Activated CD4-positive, alpha-beta T cell treated with anti-CD3 and anti-CD28 coated beads for 36 hours (primary cell): ENCODE measurements at regions of chr16 and their contacts with region 1.

Region 1: GRCh38 chr16:48054881-48055601 is 100.8 kb downstream of the ABCC12 start:
- DNase-seq: peak; percentile 64
- ATAC-seq: peak; percentile 61
- H3K4me3 Mint-ChIP-seq: no peak overlapping the region
- H3K27ac Mint-ChIP-seq: no peak overlapping the region
- H3K4me1 Mint-ChIP-seq: peaks cover 5% of the 10 kb centered on the region
- H3K27me3 Mint-ChIP-seq: peaks cover 20% of the 10 kb centered on the region

Region 2: GRCh38 chr16:47037746-47038458 is 1017.1 kb before region 1 on chr16:
- CTCF ChIA-PET with region 1: interaction called, 3 read pairs
- POLR2A ChIA-PET with region 1: no interaction called
- intact Hi-C with region 1: loop called in 1 of 2 experiments (anchors 5 kb)
- DNase-seq: peak; percentile 94
- ATAC-seq: peak; percentile 98
- H3K4me3 Mint-ChIP-seq: peak overlapping the region; percentile 65
- H3K27ac Mint-ChIP-seq: no peak overlapping the region
- H3K4me1 Mint-ChIP-seq: peaks cover 2% of the 10 kb centered on the region
- H3K27me3 Mint-ChIP-seq: peaks cover 8% of the 10 kb centered on the region

Region 3: DNA sequence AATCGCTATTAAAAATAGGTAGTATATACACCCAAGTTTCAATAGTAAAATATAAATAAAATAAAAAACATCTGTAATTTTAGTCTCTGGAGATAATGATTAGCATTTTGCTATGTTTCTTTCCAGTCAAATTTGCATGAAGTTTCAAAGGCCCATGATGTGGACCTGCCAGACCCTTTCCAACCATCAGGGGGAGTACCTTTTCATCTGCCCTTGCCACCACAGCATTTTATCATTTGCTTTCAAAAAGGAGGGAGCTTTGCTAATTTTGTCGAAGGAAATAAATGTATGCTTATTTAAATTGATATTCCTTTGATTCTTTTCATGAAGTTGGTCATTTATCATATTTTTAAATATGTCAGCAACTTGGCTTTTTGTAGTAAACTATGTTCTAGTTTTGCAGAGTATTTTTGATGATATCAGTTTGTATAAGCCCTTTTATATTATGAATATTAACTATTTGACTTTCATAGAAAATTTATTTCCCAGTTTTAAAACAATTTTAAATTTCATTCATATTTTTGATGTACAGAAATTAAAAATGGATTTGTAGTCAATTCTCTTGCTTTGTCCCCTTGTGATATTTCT is 796.1 kb before region 1 on chr16:
- CTCF ChIA-PET with region 1: no interaction called
- POLR2A ChIA-PET with region 1: no interaction called
- intact Hi-C with region 1: loop called in 1 of 2 experiments (anchors 2 kb)
- DNase-seq: peak; percentile 30
- ATAC-seq: no peak
- H3K4me3 Mint-ChIP-seq: no peak overlapping the region
- H3K27ac Mint-ChIP-seq: no peak overlapping the region
- H3K4me1 Mint-ChIP-seq: no peaks in the 10 kb centered on the region
- H3K27me3 Mint-ChIP-seq: no peaks in the 10 kb centered on the region

Region 4: DNA sequence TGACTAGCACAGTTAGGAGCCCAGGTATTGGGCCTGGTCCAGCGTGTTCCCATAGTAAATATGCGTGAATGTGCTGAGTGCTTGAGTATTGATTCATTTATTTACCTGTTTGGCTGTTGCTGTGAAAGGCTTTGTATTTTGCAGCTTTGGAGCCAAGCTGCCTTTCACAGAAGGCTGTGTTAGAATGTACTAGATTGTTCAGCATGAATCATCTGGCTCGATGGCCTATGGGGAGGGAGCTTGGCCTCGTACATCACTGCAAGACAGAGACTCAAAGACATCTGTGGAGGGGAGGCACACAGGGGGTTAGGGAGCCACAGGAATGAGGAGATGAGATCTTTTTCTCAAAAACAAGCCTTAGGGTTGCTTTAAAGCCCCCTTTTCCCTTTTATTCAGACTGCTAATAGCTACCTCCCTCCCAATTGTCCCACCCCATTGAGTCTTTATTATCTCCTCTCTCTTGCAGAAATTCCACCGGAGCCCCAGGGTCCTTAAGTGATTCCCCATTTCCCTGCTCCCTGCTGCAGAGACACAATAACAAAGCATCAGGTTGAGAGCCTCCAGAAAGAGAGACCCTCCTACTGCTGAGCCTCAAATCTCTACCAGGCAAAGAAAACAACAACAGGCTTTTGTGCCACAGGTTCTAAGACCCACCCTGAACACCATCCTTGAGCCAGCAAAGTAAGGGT is 206.5 kb before region 1 on chr16:
- CTCF ChIA-PET with region 1: no interaction called
- POLR2A ChIA-PET with region 1: no interaction called
- intact Hi-C with region 1: no loop called
- DNase-seq: no peak
- ATAC-seq: no peak
- H3K4me3 Mint-ChIP-seq: no peak overlapping the region
- H3K27ac Mint-ChIP-seq: no peak overlapping the region
- H3K4me1 Mint-ChIP-seq: no peaks in the 10 kb centered on the region
- H3K27me3 Mint-ChIP-seq: no peaks in the 10 kb centered on the region

Region 5: DNA sequence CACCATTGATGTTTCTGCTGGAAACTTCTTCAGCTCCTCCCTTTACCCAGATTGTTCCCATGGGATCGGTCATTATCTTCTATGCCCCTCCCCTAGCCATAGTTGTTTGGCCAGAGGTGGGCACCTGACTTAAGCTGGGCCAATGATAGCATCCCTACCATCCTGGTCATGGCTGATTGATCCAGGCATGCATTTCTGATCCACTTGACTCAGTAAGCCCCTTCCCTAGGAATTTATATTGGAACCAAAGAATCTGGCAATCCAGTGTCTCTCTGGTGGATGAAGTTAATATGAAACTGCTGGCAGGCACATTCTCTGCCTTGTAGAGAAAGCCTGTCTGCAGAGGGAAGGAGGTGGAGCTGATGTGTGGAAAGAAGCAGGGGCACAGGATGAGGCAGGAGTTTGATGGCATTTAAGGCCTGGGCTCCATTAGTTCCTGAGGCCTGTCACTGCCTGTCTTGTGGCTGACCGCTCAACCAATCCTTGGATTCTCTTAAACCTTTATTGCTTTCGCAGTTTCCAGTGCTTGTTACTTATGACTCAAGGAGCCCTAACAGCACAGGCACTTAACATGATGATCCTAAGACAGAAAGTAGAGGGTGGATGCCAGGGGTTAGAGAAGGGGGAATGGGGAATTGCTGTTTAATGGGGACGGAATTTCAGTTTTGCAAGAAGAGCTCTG is 51.7 kb before region 1 on chr16:
- CTCF ChIA-PET with region 1: no interaction called
- POLR2A ChIA-PET with region 1: no interaction called
- intact Hi-C with region 1: no loop called
- DNase-seq: no peak
- ATAC-seq: no peak
- H3K4me3 Mint-ChIP-seq: no peak overlapping the region
- H3K27ac Mint-ChIP-seq: no peak overlapping the region
- H3K4me1 Mint-ChIP-seq: no peaks in the 10 kb centered on the region
- H3K27me3 Mint-ChIP-seq: peaks cover 2% of the 10 kb centered on the region